Esophagus muscularis mucosa (tissue), 4 donors: ENCODE measurements at regions of chr10 and their contacts with region 1.

Region 1: GRCh38 chr10:24518981-24519597 is 204.6 kb downstream of the ARHGAP21 start:
- DNase-seq: no peak
- H3K4me3 ChIP-seq: peak overlapping the region in 1 of 4 donors; percentile 7
- H3K27ac ChIP-seq: peak overlapping the region in 1 of 4 donors; percentile 11
- H3K4me1 ChIP-seq: peaks cover 0 to 15% (median 8%) of the 10 kb centered on the region in 4 donors
- H3K27me3 ChIP-seq: no peaks in the 10 kb centered on the region
- CTCF ChIP-seq: peak; percentile 63 to 76 (median 73)
- EP300 ChIP-seq: no peak
- POLR2A ChIP-seq: no peak

Region 2: GRCh38 chr10:23994479-23995046 is 524.5 kb before region 1 on chr10:
- intact Hi-C with region 1: loop called (anchors 2 kb)
- DNase-seq: no peak
- H3K4me3 ChIP-seq: peak overlapping the region in 1 of 4 donors; percentile 5
- H3K27ac ChIP-seq: no peak overlapping the region
- H3K4me1 ChIP-seq: peaks cover 0 to 5% (median 0%) of the 10 kb centered on the region in 4 donors
- H3K27me3 ChIP-seq: no peaks in the 10 kb centered on the region
- CTCF ChIP-seq: peak; percentile 59 to 77 (median 72)
- EP300 ChIP-seq: no peak
- POLR2A ChIP-seq: no peak

Region 3: DNA sequence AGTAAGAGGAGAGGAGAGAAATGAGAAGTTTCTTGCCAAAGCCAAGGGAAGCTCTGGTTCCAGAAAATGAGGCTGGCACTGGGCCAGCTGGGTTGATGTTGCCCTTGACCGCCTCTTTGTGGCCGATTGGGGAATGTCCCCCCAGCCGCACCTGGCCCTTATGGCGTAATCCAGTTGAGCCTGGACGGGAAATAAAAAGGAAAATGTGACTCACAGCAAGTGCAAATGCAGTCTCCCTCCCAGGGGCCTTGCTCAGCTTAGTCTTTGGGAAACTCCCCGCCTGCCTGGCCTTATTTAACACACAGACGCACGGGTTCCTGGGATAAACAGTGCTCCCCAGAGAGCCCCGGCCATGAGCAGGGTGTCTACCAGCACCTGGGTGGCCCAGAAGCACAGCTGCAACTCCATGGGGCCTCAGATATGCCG is 135.4 kb before region 1 on chr10:
- intact Hi-C with region 1: loop called (anchors 10 kb)
- DNase-seq: no peak
- H3K4me3 ChIP-seq: no peak overlapping the region
- H3K27ac ChIP-seq: peak overlapping the region; percentile 38 to 61 (median 49)
- H3K4me1 ChIP-seq: peaks cover 11 to 25% (median 17%) of the 10 kb centered on the region in 4 donors
- H3K27me3 ChIP-seq: no peaks in the 10 kb centered on the region
- CTCF ChIP-seq: peak; percentile 31 to 57 (median 37)
- EP300 ChIP-seq: peak; percentile 22
- POLR2A ChIP-seq: no peak

Region 4: DNA sequence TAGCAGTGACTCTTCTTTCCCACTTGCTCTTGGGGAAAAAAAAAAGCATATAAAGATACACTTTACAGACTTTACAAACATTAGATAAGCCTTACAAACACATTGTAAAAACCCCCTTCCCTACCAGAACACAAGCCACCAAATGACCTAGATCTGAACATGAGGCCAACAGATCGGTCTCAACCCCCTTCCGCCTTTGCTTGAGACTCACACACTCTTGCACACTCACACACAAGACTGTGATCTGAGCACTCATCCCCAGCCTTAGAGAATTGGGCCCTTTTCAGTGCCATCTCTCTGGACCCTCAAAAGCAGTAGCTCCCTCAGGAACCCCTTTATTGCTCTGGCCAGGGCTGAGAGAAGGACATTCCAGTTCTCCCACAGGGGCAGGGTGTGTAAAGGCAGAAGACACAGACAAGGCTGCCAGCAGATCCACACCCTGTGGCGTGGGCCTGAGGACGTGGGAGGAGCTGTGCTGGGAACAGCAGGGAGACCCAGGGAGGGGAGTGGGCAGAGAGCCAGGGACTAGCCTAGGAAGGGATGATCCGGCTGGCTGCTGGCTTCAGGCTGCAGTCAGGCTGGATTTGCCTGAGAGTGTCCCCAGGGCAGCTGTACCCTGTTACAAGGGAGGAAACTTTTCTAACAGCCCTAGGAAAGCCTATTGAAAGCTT is 103.5 kb before region 1 on chr10:
- intact Hi-C with region 1: no loop called
- DNase-seq: no peak
- H3K4me3 ChIP-seq: no peak overlapping the region
- H3K27ac ChIP-seq: peak overlapping the region; percentile 45 to 73 (median 57)
- H3K4me1 ChIP-seq: peaks cover 17 to 23% (median 23%) of the 10 kb centered on the region in 4 donors
- H3K27me3 ChIP-seq: no peaks in the 10 kb centered on the region
- CTCF ChIP-seq: no peak
- EP300 ChIP-seq: no peak
- POLR2A ChIP-seq: peak; percentile 20

Region 5: DNA sequence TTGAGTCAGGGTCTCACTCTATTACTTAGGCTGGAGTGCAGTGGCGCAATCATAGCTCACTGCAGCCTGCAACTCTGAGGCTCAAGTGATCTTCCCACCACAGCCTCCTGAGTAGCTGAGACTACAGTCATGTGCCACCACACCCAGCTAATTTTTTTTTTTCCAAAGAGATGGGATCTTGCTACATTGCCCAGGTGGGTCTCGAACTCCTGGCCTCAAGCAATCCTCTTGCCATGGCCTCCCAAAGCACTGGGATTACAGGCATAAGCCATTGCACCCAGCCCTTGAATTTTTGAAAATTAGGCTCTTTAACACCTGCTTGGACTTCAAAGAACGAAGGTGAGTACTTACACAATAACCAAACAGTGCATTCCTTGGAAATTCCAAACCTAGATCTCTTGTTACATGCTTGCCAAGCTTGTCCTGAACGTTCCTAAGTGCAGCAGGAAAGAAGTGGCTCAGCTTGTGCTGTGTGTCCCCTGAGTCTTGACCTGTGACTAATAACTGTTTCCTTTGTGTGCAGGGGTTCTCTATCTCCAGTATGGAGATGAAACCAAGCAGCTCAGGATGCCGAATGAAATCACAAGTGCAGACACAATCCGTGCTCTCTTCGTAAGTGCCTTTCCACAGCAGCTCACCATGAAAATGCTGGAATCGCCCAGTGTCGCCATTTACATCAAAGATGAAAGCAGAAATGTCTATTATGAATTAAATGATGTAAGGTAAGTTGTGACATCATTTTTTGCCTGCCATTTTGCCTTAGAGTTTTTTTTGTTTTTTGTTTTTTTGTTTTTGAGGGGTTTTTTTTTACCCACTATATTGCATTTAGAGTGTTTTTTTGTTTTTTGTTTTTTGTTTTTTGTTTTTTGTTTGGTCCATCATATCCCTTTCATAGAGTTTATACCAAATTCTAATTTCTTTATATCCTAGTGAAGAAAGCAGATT is 86.3 kb before region 1 on chr10:
- intact Hi-C with region 1: no loop called
- DNase-seq: no peak
- H3K4me3 ChIP-seq: no peak overlapping the region
- H3K27ac ChIP-seq: no peak overlapping the region
- H3K4me1 ChIP-seq: peaks cover 0 to 6% (median 3%) of the 10 kb centered on the region in 4 donors
- H3K27me3 ChIP-seq: no peaks in the 10 kb centered on the region
- CTCF ChIP-seq: no peak
- EP300 ChIP-seq: no peak
- POLR2A ChIP-seq: no peak